ENCODE measurements at regions of chr5 and their contacts with region 1.

Region 1: DNA sequence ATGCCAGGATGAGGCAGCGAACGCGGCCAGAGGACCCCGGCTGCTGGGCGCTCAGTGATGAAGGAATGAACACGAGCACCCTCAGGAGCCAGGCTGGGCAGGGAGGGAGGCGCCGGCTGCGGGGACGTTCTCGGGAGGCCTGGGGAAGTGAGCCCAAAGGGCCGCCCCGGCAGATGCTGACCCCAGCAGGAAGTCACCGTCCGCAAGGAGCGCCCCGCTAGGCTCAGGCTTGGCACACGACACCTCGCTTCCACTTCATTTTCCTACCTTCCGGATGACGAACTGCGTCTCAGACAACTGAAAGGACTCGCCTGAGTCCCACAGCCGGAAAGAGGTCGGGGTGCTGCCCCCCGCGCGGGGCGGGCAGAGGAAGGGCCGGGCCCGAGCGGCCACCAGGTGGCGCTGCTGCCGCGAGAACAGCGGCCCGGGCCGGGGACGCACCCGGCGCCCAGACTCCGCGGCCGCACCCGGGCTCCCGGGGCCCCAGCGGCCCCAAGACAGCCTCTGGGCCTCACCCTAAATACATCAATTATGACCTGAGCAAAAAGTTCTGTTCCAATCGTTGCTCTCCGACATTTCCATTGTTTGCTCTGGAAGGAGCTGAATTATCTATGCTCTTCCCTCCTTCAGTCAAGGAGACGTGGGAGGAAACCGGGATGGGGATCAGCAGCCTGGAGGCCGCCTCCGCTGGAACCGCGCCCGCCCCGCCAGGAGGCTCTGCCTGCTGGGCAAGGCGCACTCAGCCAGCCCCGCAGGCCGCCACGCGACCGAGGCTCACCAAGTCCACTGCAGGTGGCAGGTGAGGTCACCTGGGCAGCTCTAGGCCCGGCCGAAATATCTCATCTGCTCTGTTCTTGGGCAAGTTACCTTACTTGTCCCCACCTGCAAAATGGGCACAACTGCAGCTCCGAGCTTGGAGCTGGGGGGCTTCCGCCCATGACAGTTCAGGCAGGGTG is 107.0 kb downstream of the ZNF354C start:
- DNase-seq: no peak
- H3K4me3 ChIP-seq: peak overlapping the region; percentile 16 to 53 (median 35)
- H3K27ac ChIP-seq: peak overlapping the region in 1 of 2 donors; percentile 38
- H3K4me1 ChIP-seq: no peaks in the 10 kb centered on the region
- H3K27me3 ChIP-seq: no peaks in the 10 kb centered on the region
- CTCF ChIP-seq: peak; percentile 33 to 97 (median 53)
- POLR2A ChIP-seq: no peak

Region 2: GRCh38 chr5:177296581-177296980 is 1870.6 kb before region 1 on chr5:
- intact Hi-C with region 1: loop called (anchors 10 kb)
- DNase-seq: no peak
- H3K4me3 ChIP-seq: no peak overlapping the region
- H3K27ac ChIP-seq: peak overlapping the region; percentile 40 to 71
- H3K4me1 ChIP-seq: peaks cover 1 to 13% of the 10 kb centered on the region in 2 donors
- H3K27me3 ChIP-seq: no peaks in the 10 kb centered on the region
- CTCF ChIP-seq: no peak
- POLR2A ChIP-seq: no peak

Region 3: GRCh38 chr5:179495906-179496455 is 328.8 kb after region 1 on chr5:
- intact Hi-C with region 1: loop called (anchors 10 kb)
- DNase-seq: no peak
- H3K4me3 ChIP-seq: no peak overlapping the region
- H3K27ac ChIP-seq: no peak overlapping the region
- H3K4me1 ChIP-seq: no peaks in the 10 kb centered on the region
- H3K27me3 ChIP-seq: no peaks in the 10 kb centered on the region
- CTCF ChIP-seq: no peak
- POLR2A ChIP-seq: no peak

Region 4: DNA sequence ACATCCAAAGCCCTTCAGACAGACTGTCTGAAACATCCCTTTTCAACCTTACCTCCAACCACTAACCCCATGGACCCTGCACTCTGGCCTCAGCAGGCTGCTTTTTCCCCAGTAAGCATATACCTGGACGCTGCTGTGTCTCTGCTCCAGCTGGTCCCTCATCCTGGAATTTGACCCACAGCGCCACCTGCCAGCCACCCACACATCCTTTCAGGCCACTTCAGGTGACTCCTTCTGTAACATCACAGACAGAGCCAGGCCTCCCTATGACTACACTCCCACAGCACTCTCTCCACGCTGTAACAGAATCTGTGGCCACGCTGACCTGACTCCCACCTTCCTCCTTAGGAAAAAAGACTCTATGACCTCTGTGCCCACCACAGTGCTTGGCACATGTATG is 1632.0 kb after region 1 on chr5:
- intact Hi-C with region 1: no loop called
- DNase-seq: no peak
- H3K4me3 ChIP-seq: peak overlapping the region in 1 of 3 donors; percentile 6
- H3K27ac ChIP-seq: peak overlapping the region; percentile 12 to 22
- H3K4me1 ChIP-seq: peaks cover 10 to 40% of the 10 kb centered on the region in 2 donors
- H3K27me3 ChIP-seq: no peaks in the 10 kb centered on the region
- CTCF ChIP-seq: peak in 1 of 3 donors; percentile 27
- POLR2A ChIP-seq: no peak